Esophagus squamous epithelium (tissue), 5 donors: ENCODE measurements at regions of chr5 and their contacts with region 1.

Region 1: GRCh38 chr5:80308526-80308925 is 11.3 kb upstream of the SPZ1 start:
- DNase-seq: no peak
- H3K4me3 ChIP-seq: no peak overlapping the region
- H3K27ac ChIP-seq: no peak overlapping the region
- H3K4me1 ChIP-seq: no peaks in the 10 kb centered on the region
- H3K27me3 ChIP-seq: no peaks in the 10 kb centered on the region
- CTCF ChIP-seq: no peak
- POLR2A ChIP-seq: no peak

Region 2: DNA sequence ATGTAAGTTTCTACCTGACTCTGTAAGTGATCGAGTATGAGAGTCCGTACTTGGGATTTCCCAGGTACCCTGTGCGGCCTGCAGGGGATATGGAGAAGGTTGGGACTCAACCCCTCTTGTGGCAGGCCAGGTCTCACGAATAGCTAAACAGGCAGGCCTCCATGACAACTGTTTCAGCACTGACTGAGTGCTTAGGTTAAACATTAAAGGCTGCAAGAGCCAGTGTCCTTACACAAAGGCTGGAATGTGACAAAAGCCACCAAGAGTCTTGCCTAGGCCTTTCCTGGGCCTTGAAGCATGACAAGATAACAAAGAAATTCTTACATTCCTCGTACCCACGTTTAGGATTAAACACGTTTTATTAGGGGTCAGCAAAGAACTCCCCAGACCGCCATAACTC is 214.7 kb before region 1 on chr5:
- intact Hi-C with region 1: loop called (anchors 5 kb)
- DNase-seq: no peak
- H3K4me3 ChIP-seq: no peak overlapping the region
- H3K27ac ChIP-seq: no peak overlapping the region
- H3K4me1 ChIP-seq: peaks cover 0 to 3% (median 0%) of the 10 kb centered on the region in 3 donors
- H3K27me3 ChIP-seq: no peaks in the 10 kb centered on the region
- CTCF ChIP-seq: no peak
- POLR2A ChIP-seq: no peak